ENCODE measurements at regions of chr6 and their contacts with region 1.

Region 1: DNA sequence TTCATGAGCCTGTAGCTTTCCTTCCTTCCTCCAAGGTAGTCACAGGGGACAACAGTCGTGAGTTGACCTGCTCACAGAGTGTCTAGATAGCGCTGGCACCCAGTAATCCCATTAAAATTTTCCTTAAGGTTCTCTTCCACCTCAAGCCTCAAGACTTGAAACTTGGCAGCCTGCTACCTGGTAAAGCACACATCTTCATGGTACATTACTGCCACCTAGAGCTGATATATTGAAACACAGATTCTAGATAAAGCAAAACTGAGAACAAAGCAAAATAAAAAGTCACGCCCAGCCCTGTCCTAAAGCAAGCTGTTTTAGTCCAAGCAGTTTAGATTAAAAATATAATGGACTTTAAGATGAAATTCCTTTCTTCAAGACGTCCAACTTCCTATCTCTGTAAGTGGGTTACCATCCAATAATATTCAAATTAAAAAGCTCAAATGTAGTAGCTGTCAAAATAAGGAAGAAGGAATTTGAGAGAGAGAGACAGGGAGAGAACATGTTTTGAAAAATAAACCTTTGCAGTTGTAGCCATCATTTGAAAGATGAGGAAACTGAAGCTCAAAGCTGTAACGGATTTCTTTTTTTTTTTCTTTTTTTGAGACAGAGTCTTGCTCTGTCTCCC is 50.7 kb upstream of the CD83 start:
- DNase-seq: no peak
- H3K4me3 ChIP-seq: no peak overlapping the region
- H3K27ac ChIP-seq: no peak overlapping the region
- H3K4me1 ChIP-seq: no peaks in the 10 kb centered on the region
- H3K27me3 ChIP-seq: peaks cover 0 to 23% of the 10 kb centered on the region in 2 donors
- CTCF ChIP-seq: peak; percentile 54 to 68

Region 2: GRCh38 chr6:13795041-13795750 is 271.7 kb before region 1 on chr6:
- intact Hi-C with region 1: loop called (anchors 10 kb)
- DNase-seq: peak; percentile 80 to 84
- H3K4me3 ChIP-seq: no peak overlapping the region
- H3K27ac ChIP-seq: no peak overlapping the region
- H3K4me1 ChIP-seq: no peaks in the 10 kb centered on the region
- H3K27me3 ChIP-seq: no peaks in the 10 kb centered on the region
- CTCF ChIP-seq: peak; percentile 74 to 87

Region 3: GRCh38 chr6:13908955-13909381 is 157.9 kb before region 1 on chr6:
- intact Hi-C with region 1: loop called (anchors 2 kb)
- DNase-seq: peak in 1 of 2 donors; percentile 24
- H3K4me3 ChIP-seq: no peak overlapping the region
- H3K27ac ChIP-seq: no peak overlapping the region
- H3K4me1 ChIP-seq: no peaks in the 10 kb centered on the region
- H3K27me3 ChIP-seq: peaks cover 0 to 25% of the 10 kb centered on the region in 2 donors
- CTCF ChIP-seq: peak; percentile 79 to 89